ENCODE measurements at regions of chr2 and their contacts with region 1.

Region 1: GRCh38 chr2:38185012-38185491 is 109.1 kb upstream of the CYP1B1 start:
- DNase-seq: no peak
- ATAC-seq: peak; percentile 14

Region 2: GRCh38 chr2:38207168-38207567 is 22.1 kb after region 1 on chr2:
- intact Hi-C with region 1: loop called (anchors 1 kb)
- DNase-seq: no peak
- ATAC-seq: no peak

Region 3: DNA sequence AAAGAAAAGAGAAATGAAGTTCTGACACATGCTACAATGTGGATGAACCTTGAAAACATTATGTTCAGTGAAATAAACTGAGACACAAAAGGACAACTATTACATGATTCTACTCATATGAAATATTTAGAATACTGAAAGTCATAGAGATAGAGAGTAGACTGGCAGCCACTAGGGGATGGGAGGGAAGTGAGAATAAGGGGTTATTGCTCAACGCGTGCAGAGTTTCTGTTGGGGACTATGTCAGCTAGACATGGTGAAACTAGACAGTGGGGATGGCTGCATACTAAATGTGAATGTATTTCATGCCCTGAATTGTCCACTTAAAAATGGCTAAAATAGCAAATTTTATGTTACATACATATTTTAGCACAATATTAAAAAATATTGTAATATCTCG is 300.7 kb after region 1 on chr2:
- intact Hi-C with region 1: no loop called
- DNase-seq: no peak
- ATAC-seq: no peak